CD8-positive, alpha-beta memory T cell (primary cell): ENCODE measurements at regions of chr6 and their contacts with region 1.

Region 1: GRCh38 chr6:36800223-36801076 is 38.8 kb downstream of the CPNE5 start:
- DNase-seq: no peak
- H3K4me3 ChIP-seq: no peak overlapping the region
- H3K4me3 Mint-ChIP-seq: no peak overlapping the region
- H3K27ac ChIP-seq: no peak overlapping the region
- H3K27ac Mint-ChIP-seq: no peak overlapping the region
- H3K4me1 ChIP-seq: no peaks in the 10 kb centered on the region
- H3K4me1 Mint-ChIP-seq: no peaks in the 10 kb centered on the region
- H3K27me3 ChIP-seq: no peaks in the 10 kb centered on the region
- H3K27me3 Mint-ChIP-seq: peaks cover under 1 to 4% of the 10 kb centered on the region in 2 donors

Region 2: GRCh38 chr6:37059344-37060206 is 259.1 kb after region 1 on chr6:
- CTCF ChIA-PET with region 1: no interaction called
- POLR2A ChIA-PET with region 1: no interaction called
- DNase-seq: no peak
- H3K4me3 ChIP-seq: no peak overlapping the region
- H3K4me3 Mint-ChIP-seq: no peak overlapping the region
- H3K27ac ChIP-seq: peak overlapping the region; percentile 85
- H3K27ac Mint-ChIP-seq: no peak overlapping the region
- H3K4me1 ChIP-seq: no peaks in the 10 kb centered on the region
- H3K4me1 Mint-ChIP-seq: peaks cover 0 to 5% (median 4%) of the 10 kb centered on the region in 3 donors
- H3K27me3 ChIP-seq: no peaks in the 10 kb centered on the region
- H3K27me3 Mint-ChIP-seq: no peaks in the 10 kb centered on the region

Region 3: DNA sequence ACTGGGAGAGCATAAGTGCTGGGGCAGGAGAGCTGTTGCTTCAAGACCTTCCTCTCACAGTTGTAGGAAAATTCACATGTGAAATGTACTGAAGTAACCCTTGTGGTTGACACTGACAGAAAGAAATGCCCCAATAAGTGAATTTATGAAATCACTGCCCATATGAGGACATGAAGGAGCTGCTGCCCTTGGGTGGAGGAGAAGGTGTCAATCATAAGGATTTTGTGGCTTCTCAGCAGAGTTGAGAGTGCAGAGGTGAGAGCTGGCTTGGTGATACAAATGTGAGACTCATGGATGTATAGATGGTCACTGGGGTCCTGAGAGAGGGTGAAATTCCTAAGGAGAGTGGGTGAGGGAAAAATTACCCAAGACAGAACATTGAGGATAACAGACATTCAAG is 598.7 kb after region 1 on chr6:
- CTCF ChIA-PET with region 1: no interaction called
- POLR2A ChIA-PET with region 1: interaction called, 10 read pairs
- DNase-seq: no peak
- H3K4me3 ChIP-seq: no peak overlapping the region
- H3K4me3 Mint-ChIP-seq: peak overlapping the region in 1 of 7 donors; percentile 25
- H3K27ac ChIP-seq: no peak overlapping the region
- H3K27ac Mint-ChIP-seq: peak overlapping the region in 1 of 8 donors; percentile 20
- H3K4me1 ChIP-seq: no peaks in the 10 kb centered on the region
- H3K4me1 Mint-ChIP-seq: no peaks in the 10 kb centered on the region
- H3K27me3 ChIP-seq: no peaks in the 10 kb centered on the region
- H3K27me3 Mint-ChIP-seq: peaks cover 0 to 4% of the 10 kb centered on the region in 2 donors